ENCODE measurements at regions of chr1 and their contacts with region 1.

Region 1: DNA sequence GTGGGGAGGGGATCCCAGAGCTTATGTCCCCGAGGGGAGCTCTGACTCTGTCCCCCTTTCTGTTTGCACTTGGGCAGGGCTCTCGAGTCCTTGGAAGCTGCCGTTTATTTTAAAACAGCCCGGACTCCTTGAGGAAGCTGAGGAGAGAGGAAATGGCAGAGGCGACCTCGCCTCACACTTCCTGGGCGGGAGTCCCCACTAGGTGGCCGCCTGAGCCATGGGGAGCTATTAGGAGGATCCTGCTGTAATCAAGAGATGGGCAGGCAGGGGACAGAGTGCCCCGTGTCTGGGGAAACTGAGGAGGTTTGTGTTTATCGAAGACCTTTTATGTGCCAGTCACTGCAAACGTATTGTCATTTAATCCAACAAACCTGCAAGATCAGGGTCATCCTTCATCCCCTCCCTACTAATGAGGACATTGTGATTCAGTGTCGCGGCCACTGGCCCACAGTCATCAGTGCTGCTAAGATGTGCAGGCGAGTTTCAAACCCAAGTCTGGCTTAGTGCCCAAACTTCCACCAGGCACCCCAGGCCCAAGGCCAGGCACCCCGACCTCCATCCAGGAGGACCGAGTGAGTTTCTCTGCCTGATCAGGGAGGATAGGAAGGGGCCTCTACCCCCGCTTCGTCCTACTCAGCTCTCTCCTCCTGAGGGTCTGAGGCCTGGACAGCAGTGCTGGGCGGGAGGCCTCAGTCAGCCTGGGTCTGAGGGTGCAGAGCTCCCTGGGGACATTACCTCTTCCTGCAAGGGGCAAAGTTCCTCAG is 316.9 kb upstream of the VAMP3 start:
- DNase-seq: peak in 2 of 5 donors; percentile 36 to 55
- H3K4me3 ChIP-seq: no peak overlapping the region
- H3K27ac ChIP-seq: no peak overlapping the region
- H3K4me1 ChIP-seq: peaks cover 10% of the 10 kb centered on the region
- H3K27me3 ChIP-seq: no peaks in the 10 kb centered on the region
- CTCF ChIP-seq: no peak
- EP300 ChIP-seq: no peak
- POLR2A ChIP-seq: no peak

Region 2: GRCh38 chr1:7630378-7630777 is 176.1 kb after region 1 on chr1:
- intact Hi-C with region 1: loop called in 1 of 4 experiments (anchors 10 kb)
- DNase-seq: no peak
- H3K4me3 ChIP-seq: no peak overlapping the region
- H3K27ac ChIP-seq: no peak overlapping the region
- H3K4me1 ChIP-seq: no peaks in the 10 kb centered on the region
- H3K27me3 ChIP-seq: no peaks in the 10 kb centered on the region
- CTCF ChIP-seq: no peak
- EP300 ChIP-seq: no peak
- POLR2A ChIP-seq: no peak

Measured in ovary (tissue), 10 donors.